ENCODE measurements at regions of chr6 and their contacts with region 1.

Region 1: GRCh38 chr6:159789377-159790148 is at the start of gene TCP1:
- DNase-seq: peak; percentile 98 to 100
- H3K4me3 ChIP-seq: peak within 1 kb of the TSS; percentile 68 to 85
- H3K27ac ChIP-seq: peak within 1 kb of the TSS; percentile 93 to 98
- H3K4me1 ChIP-seq: peaks cover 11 to 36% of the 10 kb centered on the region in 2 donors
- H3K27me3 ChIP-seq: no peaks in the 10 kb centered on the region
- CTCF ChIP-seq: peak in 1 of 3 experiments; percentile 7
- total RNA-seq, gene TCP1: 46.7 TPM

Region 2: GRCh38 chr6:159693128-159693893 is 96.3 kb before region 1 on chr6 and contains the start of gene SOD2:
- intact Hi-C with region 1: loop called (anchors 1 kb)
- DNase-seq: peak in 1 of 2 donors; percentile 90
- H3K4me3 ChIP-seq: peak within 1 kb of the TSS; percentile 74 to 97
- H3K27ac ChIP-seq: peak within 1 kb of the TSS; percentile 89 to 94
- H3K4me1 ChIP-seq: peaks cover 5 to 8% of the 10 kb centered on the region in 2 donors
- H3K27me3 ChIP-seq: no peaks in the 10 kb centered on the region
- CTCF ChIP-seq: no peak
- total RNA-seq, gene SOD2: 205 TPM

Region 3: GRCh38 chr6:159754959-159755914 is 34.3 kb before region 1 on chr6:
- intact Hi-C with region 1: loop called (anchors 5 kb)
- DNase-seq: no peak
- H3K4me3 ChIP-seq: no peak overlapping the region
- H3K27ac ChIP-seq: peak overlapping the region in 1 of 2 donors; percentile 19
- H3K4me1 ChIP-seq: peaks cover 0 to 4% of the 10 kb centered on the region in 2 donors
- H3K27me3 ChIP-seq: no peaks in the 10 kb centered on the region
- CTCF ChIP-seq: no peak

Region 4: GRCh38 chr6:159836718-159837490 is 47.3 kb after region 1 on chr6:
- intact Hi-C with region 1: loop called (anchors 1 kb)
- DNase-seq: no peak
- H3K4me3 ChIP-seq: peak overlapping the region; percentile 18 to 52
- H3K27ac ChIP-seq: peak overlapping the region; percentile 74 to 80
- H3K4me1 ChIP-seq: peaks cover 3 to 26% of the 10 kb centered on the region in 2 donors
- H3K27me3 ChIP-seq: no peaks in the 10 kb centered on the region
- CTCF ChIP-seq: no peak

Region 5: DNA sequence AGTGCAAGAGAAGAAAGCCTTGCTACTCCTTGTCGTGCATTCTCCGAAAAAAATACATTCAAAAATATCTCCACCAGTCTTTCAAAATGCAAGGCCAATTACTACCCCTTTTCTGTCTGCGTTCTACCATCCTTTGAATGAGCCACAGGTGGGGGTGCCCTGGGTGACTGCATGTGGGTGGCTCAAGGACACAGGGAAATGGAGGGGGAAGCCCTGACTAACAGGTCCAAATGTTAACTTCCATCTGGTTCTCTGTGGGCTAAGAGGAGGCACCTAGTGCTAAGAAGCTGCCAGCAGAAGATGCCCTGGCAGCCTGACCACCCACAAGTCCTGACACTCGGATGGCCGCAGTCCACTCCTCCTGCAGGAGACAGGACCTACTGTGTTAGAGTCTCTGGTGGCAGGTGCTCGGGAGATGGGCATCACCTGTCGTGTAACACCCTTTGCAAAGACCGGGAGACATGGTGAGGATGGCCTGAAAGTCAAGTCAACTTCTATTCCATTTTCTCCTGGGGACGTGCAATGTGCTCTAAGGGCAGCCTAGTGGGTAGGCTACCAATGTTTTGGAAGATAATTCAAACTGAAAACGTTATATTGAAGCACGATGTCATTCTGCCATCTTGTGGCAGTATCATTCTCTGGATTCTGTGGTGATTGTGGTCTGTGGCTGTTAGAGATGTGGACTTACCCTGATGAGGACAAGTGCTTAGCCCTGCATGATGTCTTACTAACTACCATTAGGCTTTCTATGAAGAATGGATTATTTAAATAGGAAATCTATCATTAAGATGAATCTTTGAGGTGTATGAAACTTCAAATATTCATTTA is 151.9 kb after region 1 on chr6:
- intact Hi-C with region 1: loop called (anchors 2 kb)
- DNase-seq: no peak
- H3K4me3 ChIP-seq: no peak overlapping the region
- H3K27ac ChIP-seq: no peak overlapping the region
- H3K4me1 ChIP-seq: peaks cover 6 to 25% of the 10 kb centered on the region in 2 donors
- H3K27me3 ChIP-seq: no peaks in the 10 kb centered on the region
- CTCF ChIP-seq: peak; percentile 38 to 66 (median 53)

Measured in ascending aorta (tissue), 2 donors.